ENCODE measurements at regions of chr20 and their contacts with region 1.

Region 1: GRCh38 chr20:14051454-14051853 is 56.1 kb downstream of the MACROD2 start:
- DNase-seq: no peak
- H3K4me3 ChIP-seq: no peak overlapping the region
- H3K27ac ChIP-seq: no peak overlapping the region
- H3K4me1 ChIP-seq: no peaks in the 10 kb centered on the region
- H3K27me3 ChIP-seq: no peaks in the 10 kb centered on the region
- CTCF ChIP-seq: no peak
- POLR2A ChIP-seq: no peak

Region 2: DNA sequence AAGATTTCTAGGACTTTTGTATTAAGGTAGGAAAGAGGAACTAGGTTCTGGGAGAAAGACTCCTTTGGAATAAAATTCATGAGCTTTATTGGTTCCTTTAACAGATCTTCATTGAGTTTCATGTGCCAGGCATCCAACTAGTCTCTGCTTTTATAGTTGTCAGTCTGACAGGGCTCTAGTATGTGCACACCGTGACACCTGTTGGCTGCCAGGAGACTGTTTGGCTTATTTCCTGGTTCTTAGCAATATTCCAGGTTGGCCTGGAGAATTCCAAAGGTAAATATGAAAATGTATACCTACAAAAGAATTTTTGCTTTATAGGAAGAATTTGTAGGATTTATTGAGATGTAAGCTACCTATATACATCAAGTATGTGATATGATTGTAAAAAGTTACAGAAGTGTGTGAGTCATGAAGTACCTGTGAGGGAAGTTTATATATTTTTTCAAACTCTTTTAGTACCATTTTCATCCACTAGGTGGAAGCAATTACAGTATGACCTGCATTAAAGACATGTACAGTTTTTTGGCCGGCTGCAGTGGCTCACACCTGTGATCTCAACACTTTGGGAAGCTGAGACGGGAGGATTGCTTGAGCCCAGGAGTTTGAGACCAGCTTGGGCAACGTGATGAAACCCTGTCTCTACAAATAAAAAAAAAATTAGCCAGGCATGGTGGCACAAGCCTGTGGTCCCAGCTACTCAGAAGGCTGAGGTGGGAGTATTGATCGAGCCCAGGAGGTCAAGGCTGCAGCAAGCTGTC is 231.4 kb before region 1 on chr20:
- intact Hi-C with region 1: loop called (anchors 5 kb)
- DNase-seq: peak; percentile 38 to 60
- H3K4me3 ChIP-seq: no peak overlapping the region
- H3K27ac ChIP-seq: no peak overlapping the region
- H3K4me1 ChIP-seq: no peaks in the 10 kb centered on the region
- H3K27me3 ChIP-seq: no peaks in the 10 kb centered on the region
- CTCF ChIP-seq: peak; percentile 60 to 74 (median 64)
- POLR2A ChIP-seq: no peak

Region 3: GRCh38 chr20:13960525-13960924 is 90.9 kb before region 1 on chr20:
- intact Hi-C with region 1: no loop called
- DNase-seq: no peak
- H3K4me3 ChIP-seq: no peak overlapping the region
- H3K27ac ChIP-seq: no peak overlapping the region
- H3K4me1 ChIP-seq: no peaks in the 10 kb centered on the region
- H3K27me3 ChIP-seq: no peaks in the 10 kb centered on the region
- CTCF ChIP-seq: no peak
- POLR2A ChIP-seq: no peak